ENCODE measurements at regions of chr6 and their contacts with region 1.

Region 1: DNA sequence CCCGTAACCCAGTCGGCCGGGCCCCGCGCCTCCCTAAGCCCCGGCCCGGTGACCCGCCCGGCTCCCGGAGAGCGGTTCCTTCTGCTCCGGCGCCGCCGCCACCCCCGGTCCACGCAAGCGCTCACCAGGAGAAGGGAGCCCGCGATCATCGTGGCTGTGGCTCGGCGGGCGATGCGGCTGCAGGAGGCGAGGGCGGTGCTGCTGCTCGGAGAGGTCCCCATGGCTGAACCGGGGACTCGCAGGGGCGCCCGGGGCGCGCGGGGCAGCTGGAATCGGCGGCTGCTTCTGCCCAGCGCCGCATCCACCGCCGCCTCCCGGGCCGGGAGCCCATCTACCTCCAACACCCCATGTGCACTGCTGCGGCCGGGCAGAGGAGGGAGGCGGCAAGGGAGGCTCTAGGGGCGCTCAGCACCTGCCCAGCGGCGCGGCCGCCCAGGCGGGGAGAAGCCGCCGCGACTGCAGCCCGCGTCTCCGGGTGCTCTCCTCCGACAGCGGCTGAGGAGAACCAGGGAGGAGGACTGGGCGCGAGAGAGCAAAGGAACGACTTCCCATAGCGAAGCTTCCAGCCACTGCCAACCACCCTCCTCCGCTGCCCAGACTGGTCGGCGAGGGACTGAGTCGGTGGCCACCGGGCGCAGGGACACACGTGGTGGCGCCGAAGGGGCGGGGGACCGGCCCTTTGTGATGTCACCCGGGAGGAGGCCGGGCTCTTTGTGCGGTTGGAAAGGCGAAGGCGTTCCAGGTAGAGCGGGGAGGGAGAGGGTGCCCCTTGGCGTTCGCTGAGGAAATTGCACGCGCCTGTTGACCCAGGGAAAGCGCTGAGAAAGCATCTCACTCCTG is at the start of gene TNFRSF21:
- DNase-seq: peak; percentile 92

Region 2: DNA sequence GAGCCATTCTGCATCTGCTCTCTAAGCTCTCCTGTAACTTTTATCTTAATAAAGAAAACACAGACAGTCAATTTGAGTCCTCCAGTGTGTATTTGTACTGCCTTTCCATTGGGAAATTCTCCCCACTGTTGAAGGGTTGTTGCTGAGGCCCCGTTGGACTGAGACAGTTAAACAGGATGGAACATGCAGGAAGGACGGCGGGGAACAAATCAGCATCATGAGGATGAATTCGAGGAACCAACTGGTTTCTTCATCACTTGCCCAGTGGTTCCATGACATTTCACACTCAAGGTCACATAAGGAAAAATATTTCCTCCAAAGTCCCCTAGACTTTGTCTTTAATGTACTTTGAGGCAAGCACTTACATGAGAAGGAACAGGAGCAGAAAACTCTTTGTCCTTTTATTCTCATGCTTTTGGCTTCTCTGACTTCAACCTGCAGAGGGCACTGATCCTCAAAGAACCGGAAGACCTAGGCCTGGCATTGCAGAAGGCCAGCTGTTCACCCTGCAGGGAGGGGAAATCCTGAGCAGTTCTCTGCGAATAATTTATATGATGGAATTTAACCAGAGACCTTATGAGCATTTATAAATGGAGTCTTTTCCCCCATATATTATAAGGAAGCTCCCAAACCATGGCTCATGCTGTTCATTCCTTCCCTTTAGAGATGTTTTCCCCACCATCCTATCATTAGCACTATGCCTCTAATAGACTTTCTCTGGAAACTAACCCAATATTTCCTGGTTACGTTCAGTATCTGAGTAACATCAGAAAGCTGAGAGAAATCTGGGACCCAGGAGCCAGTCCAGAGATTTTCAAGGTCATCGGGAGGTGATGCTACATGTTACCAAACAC is 212.2 kb before region 1 on chr6:
- in situ Hi-C with region 1: loop called (anchors 25 kb)
- DNase-seq: peak; percentile 80

Region 3: DNA sequence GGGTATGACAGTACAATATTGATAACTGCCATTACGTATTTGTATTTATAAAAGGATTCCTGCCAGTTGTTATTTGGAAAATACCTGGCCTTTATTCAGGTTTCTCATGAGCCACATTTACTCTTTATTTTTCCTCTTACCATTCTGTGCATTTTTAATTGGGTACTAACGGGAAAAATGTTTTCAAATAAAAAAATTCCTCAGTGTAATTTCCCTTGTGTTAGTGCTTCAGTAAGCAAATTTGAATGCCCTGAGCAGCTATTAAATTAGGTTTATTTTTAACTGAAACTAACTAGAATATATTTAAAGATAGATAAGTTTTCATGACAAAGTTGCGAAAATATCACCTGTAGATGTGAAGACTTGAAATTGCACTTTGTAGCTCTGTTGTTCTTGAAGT is 655.5 kb after region 1 on chr6:
- in situ Hi-C with region 1: no loop called
- DNase-seq: no peak